Activated naive CD4-positive, alpha-beta T cell treated with anti-CD3 and anti-CD28 coated beads for 36 hours (primary cell): ENCODE measurements at regions of chr12 and their contacts with region 1.

Region 1: GRCh38 chr12:51531978-51532497 is 59.0 kb upstream of the SCN8A start:
- DNase-seq: peak; percentile 87
- H3K4me3 Mint-ChIP-seq: no peak overlapping the region
- H3K27ac Mint-ChIP-seq: no peak overlapping the region
- H3K4me1 Mint-ChIP-seq: peaks cover 5% of the 10 kb centered on the region
- H3K27me3 Mint-ChIP-seq: peaks cover 2% of the 10 kb centered on the region

Region 2: DNA sequence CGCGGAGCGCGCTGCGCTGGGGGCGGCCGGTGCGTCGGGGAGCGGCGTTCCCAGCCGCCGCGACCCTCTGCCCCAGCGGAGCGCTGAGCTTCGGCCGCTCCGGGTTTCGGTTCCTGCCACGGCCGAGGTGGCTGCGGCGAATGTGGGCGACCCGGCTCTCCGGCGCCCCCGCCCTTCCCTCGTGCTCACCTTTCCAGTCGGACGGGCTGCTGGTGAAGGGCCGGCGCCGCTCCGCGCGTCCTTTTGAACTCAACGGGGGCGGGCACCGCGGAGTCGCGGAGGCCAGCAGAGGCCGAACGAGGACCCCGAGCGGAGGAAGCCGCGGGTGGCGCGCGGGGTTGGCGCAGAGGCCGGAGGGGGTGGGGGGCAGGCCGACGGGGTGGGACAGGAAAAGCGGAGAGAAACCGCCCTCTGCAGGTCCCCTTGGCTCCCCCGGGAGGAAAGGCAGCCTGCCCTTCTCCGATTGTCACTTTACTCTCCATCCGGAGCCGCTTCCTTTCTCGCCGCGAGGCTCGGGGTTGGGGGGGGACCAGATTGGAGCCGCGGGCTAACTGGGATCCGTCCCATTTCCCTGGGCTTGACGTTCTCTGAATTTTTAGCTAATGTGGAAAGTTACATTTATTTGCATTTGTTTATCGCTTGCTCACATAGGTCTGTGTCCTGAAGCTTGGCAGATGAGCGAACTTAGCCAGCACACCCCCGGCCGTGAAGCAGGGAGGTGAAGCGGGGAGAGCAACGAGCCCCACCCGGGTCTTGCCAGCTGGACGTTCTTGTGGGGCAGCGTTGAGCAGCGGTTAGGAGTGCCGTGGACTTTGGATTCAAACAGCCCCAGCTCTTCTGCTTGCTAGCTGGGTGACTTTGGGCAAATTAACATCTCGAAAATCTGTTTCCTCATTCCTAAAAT is 261.7 kb before region 1 on chr12 and contains the start of gene SMAGP:
- CTCF ChIA-PET with region 1: no interaction called
- intact Hi-C with region 1: loop called (anchors 10 kb)
- DNase-seq: peak; percentile 51
- H3K4me3 Mint-ChIP-seq: peak within 1 kb of the TSS; percentile 83
- H3K27ac Mint-ChIP-seq: no peak within 1 kb of the TSS
- H3K4me1 Mint-ChIP-seq: peaks cover 20% of the 10 kb centered on the region
- H3K27me3 Mint-ChIP-seq: peaks cover 8% of the 10 kb centered on the region
- total RNA-seq, gene SMAGP: 0.54 to 1.2 TPM

Region 3: GRCh38 chr12:51430231-51430906 is 101.7 kb before region 1 on chr12:
- CTCF ChIA-PET with region 1: interaction called, 19 read pairs
- intact Hi-C with region 1: loop called (anchors 1 kb)
- DNase-seq: no peak
- H3K4me3 Mint-ChIP-seq: no peak overlapping the region
- H3K27ac Mint-ChIP-seq: no peak overlapping the region
- H3K4me1 Mint-ChIP-seq: peaks cover 1% of the 10 kb centered on the region
- H3K27me3 Mint-ChIP-seq: no peaks in the 10 kb centered on the region

Region 4: GRCh38 chr12:51521554-51522276 is 10.3 kb before region 1 on chr12:
- CTCF ChIA-PET with region 1: interaction called, 16 read pairs
- intact Hi-C with region 1: no loop called
- DNase-seq: no peak
- H3K4me3 Mint-ChIP-seq: no peak overlapping the region
- H3K27ac Mint-ChIP-seq: no peak overlapping the region
- H3K4me1 Mint-ChIP-seq: no peaks in the 10 kb centered on the region
- H3K27me3 Mint-ChIP-seq: no peaks in the 10 kb centered on the region

Region 5: DNA sequence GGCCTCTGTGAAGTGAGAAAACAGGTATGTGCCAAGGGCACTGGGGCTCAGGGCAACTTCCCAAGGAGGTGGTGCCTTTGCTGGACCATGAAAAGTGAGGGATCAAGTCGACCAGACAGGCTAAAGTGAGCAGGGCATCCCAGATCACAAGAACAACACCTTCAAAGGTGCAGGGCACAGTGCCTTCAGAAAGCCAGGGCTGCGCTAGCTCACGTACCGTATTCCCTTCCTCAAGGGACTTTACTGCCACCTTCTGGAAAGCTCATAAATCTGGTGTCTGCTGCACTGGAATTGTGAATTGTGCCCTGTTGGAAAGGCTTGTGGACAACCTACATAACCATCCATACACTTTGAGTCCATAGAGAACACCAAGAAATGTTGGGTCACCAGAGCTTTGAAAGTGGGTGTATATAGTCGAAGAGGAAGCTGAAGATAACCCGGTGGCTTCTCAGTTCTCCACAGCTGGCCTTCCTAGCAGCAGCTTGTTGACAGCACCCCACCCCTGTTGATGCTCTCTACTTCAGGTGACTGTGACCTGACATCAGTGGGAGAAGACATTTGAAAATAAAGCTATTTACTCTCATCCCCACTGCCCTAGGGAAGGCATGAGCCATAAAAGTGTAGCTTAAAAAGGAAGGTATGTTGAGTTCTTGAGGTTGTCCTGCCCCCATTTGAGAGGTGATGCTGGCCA is 292.0 kb after region 1 on chr12:
- CTCF ChIA-PET with region 1: interaction called, 6 read pairs
- intact Hi-C with region 1: loop called (anchors 2 kb)
- DNase-seq: peak; percentile 50
- H3K4me3 Mint-ChIP-seq: no peak overlapping the region
- H3K27ac Mint-ChIP-seq: no peak overlapping the region
- H3K4me1 Mint-ChIP-seq: peaks cover 28% of the 10 kb centered on the region
- H3K27me3 Mint-ChIP-seq: no peaks in the 10 kb centered on the region

Region 6: DNA sequence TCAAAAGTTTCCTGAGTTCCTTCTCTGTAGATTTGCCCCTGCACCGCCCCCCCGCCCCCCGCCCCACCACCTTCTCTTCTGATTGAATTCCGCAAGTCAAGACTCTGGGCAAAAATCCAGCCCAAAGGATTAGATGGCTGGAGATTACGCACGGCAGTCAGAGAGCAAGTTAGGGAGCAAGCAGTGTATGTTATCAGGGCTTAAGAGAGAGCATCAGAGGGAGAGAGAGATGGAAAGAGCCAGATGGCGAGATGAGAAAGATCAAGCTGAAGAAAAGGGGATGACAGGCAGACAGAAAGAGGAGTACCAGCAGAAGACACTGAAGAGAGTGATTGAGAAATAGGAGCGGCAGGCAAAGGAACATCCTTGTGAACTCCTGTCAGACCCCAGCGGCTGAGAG is 342.0 kb after region 1 on chr12:
- CTCF ChIA-PET with region 1: no interaction called
- intact Hi-C with region 1: loop called (anchors 2 kb)
- DNase-seq: no peak
- H3K4me3 Mint-ChIP-seq: no peak overlapping the region
- H3K27ac Mint-ChIP-seq: no peak overlapping the region
- H3K4me1 Mint-ChIP-seq: peaks cover 9% of the 10 kb centered on the region
- H3K27me3 Mint-ChIP-seq: peaks cover 15% of the 10 kb centered on the region